ENCODE measurements at regions of chr10 and their contacts with region 1.

Region 1: DNA sequence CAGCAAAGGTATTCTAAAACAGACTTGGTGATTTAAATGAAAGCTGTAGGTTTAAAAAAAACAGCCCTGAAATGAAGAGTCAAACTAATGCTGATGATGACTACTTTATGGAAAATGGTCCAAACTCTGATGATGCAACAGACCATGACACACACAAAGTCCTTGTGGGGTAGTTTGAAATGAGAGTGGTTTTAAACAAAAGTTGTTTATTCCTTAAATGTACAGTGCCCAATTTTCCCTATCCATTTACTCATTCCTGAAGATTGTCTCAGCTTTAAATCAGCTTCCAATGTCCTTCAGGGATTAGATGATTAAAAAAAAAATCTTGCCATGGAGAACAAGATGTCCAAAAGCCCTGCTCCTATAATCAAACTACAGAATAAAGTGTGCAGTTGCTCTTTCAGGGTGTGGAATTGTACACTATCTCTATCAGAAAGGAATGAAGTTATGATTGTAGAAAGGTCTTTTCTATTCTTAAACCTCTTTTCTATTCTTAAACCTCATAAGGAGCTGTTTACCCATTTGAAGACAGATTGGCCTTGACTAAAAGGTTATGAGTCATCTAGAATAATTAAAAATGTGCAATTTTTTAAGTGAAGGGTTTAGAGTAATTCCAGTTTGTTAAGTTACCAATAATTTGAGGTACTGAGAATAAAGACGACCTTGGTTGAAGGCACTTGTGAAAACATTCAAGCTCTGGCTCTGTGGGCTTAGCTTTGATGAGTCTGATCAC is 70.2 kb upstream of the ITGA8 start:
- DNase-seq: no peak
- ATAC-seq: peak; percentile 36
- H3K4me3 ChIP-seq: no peak overlapping the region
- H3K27ac ChIP-seq: peak overlapping the region; percentile 55 to 96
- H3K4me1 ChIP-seq: peaks cover 6 to 10% of the 10 kb centered on the region in 2 donors
- H3K27me3 ChIP-seq: no peaks in the 10 kb centered on the region

Region 2: GRCh38 chr10:15222511-15222910 is 567.4 kb before region 1 on chr10:
- intact Hi-C with region 1: no loop called
- DNase-seq: no peak
- ATAC-seq: no peak
- H3K4me3 ChIP-seq: no peak overlapping the region
- H3K27ac ChIP-seq: no peak overlapping the region
- H3K4me1 ChIP-seq: no peaks in the 10 kb centered on the region
- H3K27me3 ChIP-seq: no peaks in the 10 kb centered on the region

Region 3: DNA sequence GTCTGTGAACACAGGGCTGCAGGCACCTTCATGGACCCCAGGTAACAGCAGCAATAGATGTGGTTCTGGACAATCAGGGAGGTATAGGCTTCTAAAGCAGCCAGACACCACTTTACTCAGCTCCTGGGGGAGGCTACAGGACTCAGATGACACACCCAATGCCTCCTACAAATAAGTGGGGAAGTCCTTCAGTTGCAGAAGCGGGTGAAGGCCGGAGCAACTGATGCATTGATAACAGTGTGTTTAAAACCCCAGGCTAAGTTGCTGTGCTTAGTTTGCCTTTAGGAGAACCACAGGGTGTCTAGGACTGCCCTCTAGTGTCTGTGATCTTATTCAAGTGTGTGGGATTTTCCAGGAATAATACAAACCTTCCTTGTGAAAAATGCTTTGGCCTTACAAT is 64.4 kb before region 1 on chr10:
- intact Hi-C with region 1: loop called in 1 of 2 experiments (anchors 5 kb)
- DNase-seq: no peak
- ATAC-seq: peak; percentile 84
- H3K4me3 ChIP-seq: no peak overlapping the region
- H3K27ac ChIP-seq: peak overlapping the region; percentile 69 to 87
- H3K4me1 ChIP-seq: peaks cover 0 to 8% of the 10 kb centered on the region in 2 donors
- H3K27me3 ChIP-seq: no peaks in the 10 kb centered on the region

Region 4: GRCh38 chr10:15763006-15763405 is 27.0 kb before region 1 on chr10:
- intact Hi-C with region 1: no loop called
- DNase-seq: no peak
- ATAC-seq: no peak
- H3K4me3 ChIP-seq: no peak overlapping the region
- H3K27ac ChIP-seq: no peak overlapping the region
- H3K4me1 ChIP-seq: no peaks in the 10 kb centered on the region
- H3K27me3 ChIP-seq: no peaks in the 10 kb centered on the region

Measured in aorta (tissue), 5 donors.